GM12878 (cell line): ENCODE measurements at regions of chr1 and their contacts with region 1.

Region 1: DNA sequence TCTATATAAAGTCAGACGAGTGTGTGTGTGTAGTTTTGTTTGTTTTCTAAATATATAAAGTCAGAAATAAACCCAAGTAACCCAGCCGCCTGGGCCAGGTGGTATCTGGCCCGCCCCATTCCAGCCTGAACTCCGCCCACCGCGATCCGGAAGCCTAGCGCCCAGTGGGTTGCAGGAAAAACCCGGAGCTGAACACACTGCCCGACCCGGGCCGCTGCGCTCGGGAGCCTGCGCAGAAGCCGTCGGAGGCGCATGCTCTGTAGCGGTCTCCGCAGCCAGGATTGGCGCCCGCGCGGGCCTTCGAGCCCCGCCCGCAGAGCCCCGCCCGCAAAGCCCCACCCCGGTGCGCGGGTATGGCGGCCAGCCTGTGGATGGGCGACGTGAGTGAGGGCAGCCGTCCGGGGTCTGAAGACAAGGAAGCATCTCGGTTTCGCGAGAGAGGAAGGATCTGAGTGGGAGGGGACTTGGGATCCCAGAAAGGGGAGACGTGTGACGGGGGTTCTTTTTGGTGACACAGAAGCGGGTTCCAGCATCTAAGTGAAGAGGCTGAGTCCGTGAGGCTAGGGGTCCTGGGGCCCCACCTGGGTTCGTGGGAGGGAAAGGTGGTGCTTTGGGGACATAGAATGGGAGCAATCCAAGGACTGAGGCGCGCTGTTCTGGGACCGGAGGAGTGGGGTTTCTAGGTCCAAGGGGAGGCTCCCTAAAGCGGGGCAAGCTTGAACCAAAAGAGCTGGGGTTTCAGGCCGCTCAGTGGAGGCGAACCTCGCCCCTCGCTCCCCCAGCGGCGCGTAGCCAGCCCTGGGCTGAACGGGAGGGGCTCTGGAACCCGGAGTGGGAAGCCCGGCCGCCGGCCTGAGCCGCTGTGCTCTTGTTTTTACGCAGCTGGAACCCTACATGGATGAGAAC is at the start of gene TRNAU1AP:
- DNase-seq: peak; percentile 91
- ATAC-seq: peak; percentile 95
- H3K4me3 ChIP-seq: peak within 1 kb of the TSS; percentile 87
- H3K27ac ChIP-seq: peak within 1 kb of the TSS; percentile 86
- H3K4me1 ChIP-seq: no peaks in the 10 kb centered on the region; the same call in none of the 2 replicates
- H3K27me3 ChIP-seq: no peaks in the 10 kb centered on the region
- CTCF ChIP-seq: no peak
- EP300 ChIP-seq: peak in 1 of 2 experiments; percentile 68; a peak in 1 of 4 replicates
- POLR2A ChIP-seq: peak; percentile 90
- RAD21 ChIP-seq: no peak
- polyA plus RNA-seq, gene TRNAU1AP: 53.1 to 53.8 TPM

Region 2: DNA sequence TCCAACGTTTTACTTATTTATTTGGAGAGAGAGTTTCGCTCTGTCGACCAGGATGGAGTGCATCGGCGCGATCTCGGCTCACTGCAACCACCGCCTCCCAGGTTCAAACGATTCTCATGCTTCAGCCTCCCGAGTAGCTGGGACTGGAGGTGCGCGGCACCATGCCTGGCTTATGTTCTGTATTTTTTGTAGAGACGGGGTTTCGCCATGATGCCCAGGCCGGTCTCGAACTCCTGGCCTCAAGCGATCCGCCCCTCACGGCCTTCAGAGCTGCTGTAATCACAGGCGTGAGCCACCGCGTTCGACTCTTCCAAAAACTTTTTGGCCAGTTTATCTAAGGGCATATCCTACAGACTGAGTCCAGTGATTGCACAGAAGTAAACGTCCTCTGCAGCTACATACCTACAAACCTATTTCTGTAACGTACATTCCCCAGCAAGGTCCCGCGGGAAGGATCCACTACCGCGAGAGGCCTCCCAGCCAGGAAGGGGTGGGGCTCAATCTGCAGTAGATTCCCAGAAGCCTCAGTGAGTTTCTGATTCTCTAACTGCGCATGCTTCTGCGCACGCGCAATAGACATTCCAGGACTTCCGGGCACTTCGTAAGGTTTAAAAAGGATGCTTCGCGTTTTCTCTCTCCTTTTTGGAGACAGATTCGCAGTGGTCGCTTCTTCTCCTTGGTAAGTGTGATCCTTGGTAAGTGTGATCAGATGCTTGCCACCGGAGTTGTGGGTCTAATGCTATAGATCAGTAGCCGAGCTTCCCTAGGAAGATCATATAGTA is 47.4 kb before region 1 on chr1 and contains the start of gene RCC1:
- CTCF ChIA-PET with region 1: no interaction called
- POLR2A ChIA-PET with region 1: interaction called, 10 read pairs
- RAD21 ChIA-PET with region 1: interaction called, 6 read pairs
- SMC1A ChIA-PET with region 1: interaction called, 3 read pairs
- in situ Hi-C with region 1: no loop called
- intact Hi-C with region 1: no loop called
- DNase-seq: peak; percentile 98
- ATAC-seq: peak; percentile 80
- H3K4me3 ChIP-seq: peak within 1 kb of the TSS; percentile 84
- H3K27ac ChIP-seq: peak within 1 kb of the TSS; percentile 94
- H3K4me1 ChIP-seq: peaks cover 10% of the 10 kb centered on the region
- H3K27me3 ChIP-seq: no peaks in the 10 kb centered on the region
- CTCF ChIP-seq: no peak
- EP300 ChIP-seq: no peak
- POLR2A ChIP-seq: peak; percentile 89
- RAD21 ChIP-seq: no peak
- polyA plus RNA-seq, gene RCC1: 8.3 to 15.2 TPM

Region 3: GRCh38 chr1:28535180-28535579 is 17.8 kb before region 1 on chr1:
- CTCF ChIA-PET with region 1: no interaction called
- POLR2A ChIA-PET with region 1: no interaction called
- RAD21 ChIA-PET with region 1: no interaction called
- SMC1A ChIA-PET with region 1: no interaction called
- in situ Hi-C with region 1: no loop called
- intact Hi-C with region 1: no loop called
- DNase-seq: no peak
- ATAC-seq: no peak
- H3K4me3 ChIP-seq: no peak overlapping the region
- H3K27ac ChIP-seq: no peak overlapping the region
- H3K4me1 ChIP-seq: no peaks in the 10 kb centered on the region
- H3K27me3 ChIP-seq: no peaks in the 10 kb centered on the region
- CTCF ChIP-seq: no peak
- EP300 ChIP-seq: no peak
- POLR2A ChIP-seq: no peak
- RAD21 ChIP-seq: no peak

Region 4: GRCh38 chr1:28682840-28683239 is 129.8 kb after region 1 on chr1:
- CTCF ChIA-PET with region 1: no interaction called
- POLR2A ChIA-PET with region 1: no interaction called
- RAD21 ChIA-PET with region 1: no interaction called
- SMC1A ChIA-PET with region 1: no interaction called
- in situ Hi-C with region 1: no loop called
- intact Hi-C with region 1: no loop called
- DNase-seq: no peak
- ATAC-seq: no peak
- H3K4me3 ChIP-seq: no peak overlapping the region
- H3K27ac ChIP-seq: no peak overlapping the region
- H3K4me1 ChIP-seq: no peaks in the 10 kb centered on the region
- H3K27me3 ChIP-seq: no peaks in the 10 kb centered on the region
- CTCF ChIP-seq: no peak
- EP300 ChIP-seq: no peak
- POLR2A ChIP-seq: no peak
- RAD21 ChIP-seq: no peak